ENCODE measurements at regions of chr3 and their contacts with region 1.

Region 1: GRCh38 chr3:45923755-45924154 is 19.5 kb upstream of the CXCR6 start:
- DNase-seq: no peak
- H3K4me3 ChIP-seq: no peak overlapping the region
- H3K27ac ChIP-seq: no peak overlapping the region
- H3K4me1 ChIP-seq: no peaks in the 10 kb centered on the region
- H3K27me3 ChIP-seq: no peaks in the 10 kb centered on the region

Region 2: DNA sequence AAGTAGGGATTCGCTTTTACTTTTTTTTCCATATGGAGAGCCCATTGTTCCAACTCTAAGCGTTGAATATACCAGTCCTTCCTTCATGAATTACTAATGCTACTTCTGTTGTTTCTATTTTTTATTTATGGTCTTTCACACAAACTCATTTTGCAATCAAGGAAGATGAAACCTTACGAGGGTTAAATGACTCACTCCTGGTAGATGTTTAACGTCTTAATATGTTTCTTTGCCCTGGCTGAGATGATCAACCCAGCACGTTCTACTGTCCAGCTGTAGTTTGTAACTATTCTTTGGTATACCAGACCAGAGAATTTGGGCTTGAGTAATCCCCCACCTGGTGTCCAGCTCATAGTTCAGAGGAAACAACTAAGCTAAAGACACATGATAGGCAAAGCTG is 800.7 kb before region 1 on chr3:
- CTCF ChIA-PET with region 1: no interaction called
- POLR2A ChIA-PET with region 1: no interaction called
- DNase-seq: no peak
- H3K4me3 ChIP-seq: no peak overlapping the region
- H3K27ac ChIP-seq: no peak overlapping the region
- H3K4me1 ChIP-seq: peaks cover 6 to 11% (median 9%) of the 10 kb centered on the region in 4 experiments
- H3K27me3 ChIP-seq: no peaks in the 10 kb centered on the region

Region 3: DNA sequence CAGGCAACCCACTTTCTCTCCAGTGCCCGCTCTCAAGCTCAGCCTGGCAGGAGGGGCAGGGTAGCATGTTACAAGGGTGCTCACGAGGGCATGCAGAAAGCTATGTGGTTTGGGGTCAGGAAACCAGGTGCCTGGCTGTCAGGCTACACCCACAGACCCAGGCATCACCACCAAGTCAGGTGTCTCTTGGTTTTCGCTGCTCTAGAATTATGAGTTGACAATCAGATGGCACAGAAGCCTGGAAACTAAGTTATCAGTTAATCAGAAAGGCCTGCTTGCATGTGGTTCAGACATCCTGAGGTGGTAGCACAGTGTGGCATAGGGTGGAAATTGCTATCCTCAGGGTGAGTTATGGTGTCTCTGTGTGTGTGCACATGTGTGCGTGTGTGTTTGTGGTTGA is 53.7 kb before region 1 on chr3:
- CTCF ChIA-PET with region 1: no interaction called
- POLR2A ChIA-PET with region 1: no interaction called
- DNase-seq: peak; percentile 72 to 99 (median 95)
- H3K4me3 ChIP-seq: no peak overlapping the region
- H3K27ac ChIP-seq: no peak overlapping the region
- H3K4me1 ChIP-seq: peaks cover 5 to 39% (median 27%) of the 10 kb centered on the region in 4 experiments
- H3K27me3 ChIP-seq: no peaks in the 10 kb centered on the region

Region 4: GRCh38 chr3:45906681-45907407 is 16.9 kb before region 1 on chr3:
- CTCF ChIA-PET with region 1: interaction called, 15 read pairs
- POLR2A ChIA-PET with region 1: no interaction called
- DNase-seq: peak in 1 of 3 donors; percentile 25
- H3K4me3 ChIP-seq: no peak overlapping the region
- H3K27ac ChIP-seq: no peak overlapping the region
- H3K4me1 ChIP-seq: peaks cover 0 to 5% (median 1%) of the 10 kb centered on the region in 4 experiments
- H3K27me3 ChIP-seq: no peaks in the 10 kb centered on the region

Measured in common myeloid progenitor, CD34-positive (primary cell).